Lower leg skin (tissue), 4 donors: ENCODE measurements at regions of chr16 and their contacts with region 1.

Region 1: GRCh38 chr16:20849587-20850390 is 43.5 kb downstream of the REXO5 start:
- DNase-seq: peak; percentile 75 to 94
- H3K4me3 ChIP-seq: no peak overlapping the region
- CTCF ChIP-seq: peak in 2 of 3 donors; percentile 92 to 97
- POLR2A ChIP-seq: no peak

Region 2: GRCh38 chr16:21083729-21084268 is 234.0 kb after region 1 on chr16:
- intact Hi-C with region 1: loop called (anchors 2 kb)
- DNase-seq: peak; percentile 40 to 91
- H3K4me3 ChIP-seq: no peak overlapping the region
- CTCF ChIP-seq: peak in 1 of 3 donors; percentile 19
- POLR2A ChIP-seq: no peak

Region 3: DNA sequence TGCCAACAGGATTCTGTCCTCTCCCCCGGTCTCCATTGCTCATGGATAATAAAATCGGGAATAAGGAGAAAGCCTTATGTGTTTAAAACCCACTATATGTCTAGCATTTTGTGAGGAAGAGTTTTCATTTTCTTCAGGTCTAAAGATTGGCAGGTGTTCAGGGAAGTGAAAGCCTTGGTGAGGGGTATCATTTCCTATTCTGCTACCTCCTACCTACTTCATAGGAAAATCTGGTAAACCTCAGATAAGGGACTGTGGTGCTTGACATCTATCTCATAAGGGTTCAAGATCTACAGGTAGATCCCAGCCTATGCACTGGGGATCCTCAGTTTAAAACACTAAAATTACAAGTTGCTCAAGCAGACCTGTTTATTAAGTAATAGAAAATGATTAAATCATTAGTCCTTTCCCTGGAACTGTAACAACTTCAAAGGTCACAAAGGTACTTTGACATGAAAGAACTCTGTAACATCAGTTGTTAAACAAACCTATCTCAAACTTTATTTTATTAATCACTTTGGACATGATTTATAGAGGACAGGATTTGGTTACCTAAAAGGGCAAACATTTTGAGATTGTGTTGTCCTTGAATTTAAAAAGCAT is 1164.6 kb after region 1 on chr16:
- intact Hi-C with region 1: no loop called
- DNase-seq: no peak
- H3K4me3 ChIP-seq: no peak overlapping the region
- CTCF ChIP-seq: no peak
- POLR2A ChIP-seq: no peak